Colonic mucosa (tissue), 4 donors: ENCODE measurements at regions of chr10 and their contacts with region 1.

Region 1: DNA sequence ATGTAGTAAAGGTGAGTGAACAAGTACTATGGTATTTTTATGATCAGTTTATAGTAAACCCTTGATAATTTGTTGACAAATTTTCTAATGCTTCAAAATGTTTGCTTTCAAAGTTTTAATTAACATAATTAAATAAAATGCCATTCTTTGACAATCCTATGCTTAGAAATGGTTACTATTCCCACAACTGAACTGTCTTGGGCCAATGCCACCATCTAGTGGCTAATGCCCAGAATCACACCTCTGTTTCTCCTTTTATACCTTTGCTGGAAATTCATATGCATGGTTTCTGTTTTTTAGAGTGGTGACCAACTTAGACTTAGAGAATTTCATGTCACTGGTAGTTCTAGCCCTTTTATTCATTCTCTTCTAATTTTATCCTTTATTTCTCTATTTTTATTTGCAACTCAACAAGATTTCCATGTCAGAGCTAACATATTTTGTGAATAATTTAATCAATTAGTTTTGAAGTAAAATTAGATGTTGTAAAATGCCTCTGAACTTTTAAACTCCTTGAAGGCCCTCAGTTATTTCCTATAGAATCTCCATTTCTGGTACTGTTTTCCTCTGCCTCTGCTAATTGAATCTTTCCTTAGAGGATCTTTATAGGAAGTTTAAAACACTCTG is 31.1 kb downstream of the PCGF5 start:
- DNase-seq: peak; percentile 49
- H3K4me3 ChIP-seq: no peak overlapping the region
- H3K27ac ChIP-seq: no peak overlapping the region
- H3K4me1 ChIP-seq: no peaks in the 10 kb centered on the region
- H3K27me3 ChIP-seq: no peaks in the 10 kb centered on the region
- CTCF ChIP-seq: peak; percentile 87

Region 2: GRCh38 chr10:90912174-90912573 is 339.4 kb before region 1 on chr10:
- intact Hi-C with region 1: loop called (anchors 10 kb)
- DNase-seq: no peak
- H3K4me3 ChIP-seq: no peak overlapping the region
- H3K27ac ChIP-seq: no peak overlapping the region
- H3K4me1 ChIP-seq: no peaks in the 10 kb centered on the region
- H3K27me3 ChIP-seq: no peaks in the 10 kb centered on the region
- CTCF ChIP-seq: no peak

Region 3: DNA sequence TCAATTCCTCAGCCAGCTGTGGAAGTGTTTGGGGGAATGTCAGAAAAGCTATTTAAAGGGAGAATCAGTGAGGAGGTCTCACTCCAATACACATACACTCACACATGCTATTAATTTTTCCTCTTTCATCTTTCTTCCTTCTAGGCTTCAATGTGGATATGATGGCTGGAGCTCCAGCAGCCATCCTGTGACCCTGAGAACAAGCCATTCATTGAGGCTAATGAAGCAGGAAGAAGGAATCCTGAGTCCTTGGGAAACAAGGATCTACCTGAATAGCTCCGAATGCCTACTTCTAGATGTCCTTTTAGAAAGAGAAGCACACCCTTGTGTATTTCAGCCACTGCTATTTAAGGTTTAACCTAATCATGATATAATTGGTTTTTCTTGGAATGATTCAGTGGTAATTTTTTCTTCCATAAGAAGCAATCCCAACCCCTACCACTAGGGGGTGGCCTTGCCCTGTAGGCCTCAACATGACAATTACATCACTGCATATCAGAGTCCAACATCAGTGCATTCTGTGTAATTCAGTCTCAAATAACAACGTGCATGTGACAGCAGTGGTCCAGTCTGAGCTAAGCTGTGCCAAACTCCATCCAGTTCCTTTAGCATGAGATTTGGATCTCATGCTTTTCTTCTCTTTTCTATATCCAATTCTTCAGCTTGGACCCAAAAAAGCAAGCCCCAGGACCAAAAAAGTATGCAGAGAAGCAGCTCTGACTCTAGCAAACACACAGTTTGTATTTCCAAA is 245.4 kb before region 1 on chr10:
- intact Hi-C with region 1: loop called (anchors 2 kb)
- DNase-seq: peak; percentile 68
- H3K4me3 ChIP-seq: no peak overlapping the region
- H3K27ac ChIP-seq: no peak overlapping the region
- H3K4me1 ChIP-seq: no peaks in the 10 kb centered on the region
- H3K27me3 ChIP-seq: no peaks in the 10 kb centered on the region
- CTCF ChIP-seq: peak; percentile 93

Region 4: GRCh38 chr10:91080776-91081175 is 170.8 kb before region 1 on chr10:
- intact Hi-C with region 1: no loop called
- DNase-seq: no peak
- H3K4me3 ChIP-seq: no peak overlapping the region
- H3K27ac ChIP-seq: no peak overlapping the region
- H3K4me1 ChIP-seq: peaks cover 7% of the 10 kb centered on the region
- H3K27me3 ChIP-seq: no peaks in the 10 kb centered on the region
- CTCF ChIP-seq: no peak

Region 5: DNA sequence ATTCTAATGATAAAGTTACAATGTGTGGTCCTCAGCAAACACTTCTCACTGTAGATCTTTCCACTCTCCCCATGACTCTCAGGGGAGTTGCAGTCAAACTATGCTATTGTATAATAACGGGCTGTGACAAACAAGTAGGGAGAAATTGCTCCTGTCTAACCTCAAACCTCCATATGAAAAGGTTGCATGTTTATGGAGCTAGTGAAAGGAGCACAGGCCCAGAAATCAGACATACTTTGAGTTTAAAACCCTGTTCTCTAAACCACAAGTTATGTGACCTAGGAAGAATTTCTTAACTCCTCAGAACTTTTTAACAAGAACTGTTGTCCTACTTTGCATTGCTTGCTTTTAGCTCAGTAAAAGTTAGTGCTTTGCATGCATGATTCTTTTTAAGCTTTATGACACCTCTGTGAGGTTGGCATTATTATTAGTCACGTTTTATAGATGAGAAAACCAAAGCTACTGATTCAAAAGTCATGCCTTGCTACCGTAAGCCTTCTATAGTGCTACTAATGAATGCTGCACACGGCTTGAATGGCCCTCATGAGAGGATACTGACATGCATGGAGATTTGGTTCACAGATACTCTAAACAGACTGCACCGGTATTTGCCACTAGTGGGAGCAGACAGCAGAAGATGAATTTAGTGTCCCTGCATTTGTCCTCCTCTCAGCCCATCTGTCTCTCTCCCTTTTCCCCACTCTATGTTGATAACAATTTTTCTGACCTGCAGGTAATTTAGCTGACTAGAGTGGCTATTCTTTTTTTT is 160.6 kb before region 1 on chr10:
- intact Hi-C with region 1: loop called (anchors 2 kb)
- DNase-seq: no peak
- H3K4me3 ChIP-seq: no peak overlapping the region
- H3K27ac ChIP-seq: no peak overlapping the region
- H3K4me1 ChIP-seq: no peaks in the 10 kb centered on the region
- H3K27me3 ChIP-seq: no peaks in the 10 kb centered on the region
- CTCF ChIP-seq: no peak

Region 6: DNA sequence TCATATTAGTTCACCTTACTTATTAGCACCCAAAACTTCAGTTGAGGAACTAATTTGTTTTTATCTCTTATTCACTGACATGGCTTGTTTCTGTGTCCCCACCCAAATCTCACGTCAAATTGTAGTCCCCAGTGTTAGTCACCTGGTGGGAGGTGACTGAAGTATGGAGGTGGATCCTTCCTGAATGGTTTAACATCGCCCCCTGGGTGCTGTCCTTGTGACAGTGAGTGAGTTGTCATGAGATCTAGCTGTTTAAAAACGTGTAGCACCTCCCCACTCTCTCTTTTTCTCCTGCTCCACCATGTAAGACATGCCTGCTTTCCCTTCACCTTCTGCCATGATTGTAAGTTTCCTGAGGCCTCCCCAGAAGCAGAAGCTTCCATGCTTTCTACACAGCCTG is 83.6 kb after region 1 on chr10:
- intact Hi-C with region 1: no loop called
- DNase-seq: no peak
- H3K4me3 ChIP-seq: no peak overlapping the region
- H3K27ac ChIP-seq: no peak overlapping the region
- H3K4me1 ChIP-seq: no peaks in the 10 kb centered on the region
- H3K27me3 ChIP-seq: no peaks in the 10 kb centered on the region
- CTCF ChIP-seq: no peak

Region 7: GRCh38 chr10:91462423-91462822 is 210.9 kb after region 1 on chr10:
- intact Hi-C with region 1: no loop called
- DNase-seq: no peak
- H3K4me3 ChIP-seq: no peak overlapping the region
- H3K27ac ChIP-seq: no peak overlapping the region
- H3K4me1 ChIP-seq: no peaks in the 10 kb centered on the region
- H3K27me3 ChIP-seq: no peaks in the 10 kb centered on the region
- CTCF ChIP-seq: no peak